Right lobe of liver (tissue), 6 donors: ENCODE measurements at regions of chr12 and their contacts with region 1.

Region 1: DNA sequence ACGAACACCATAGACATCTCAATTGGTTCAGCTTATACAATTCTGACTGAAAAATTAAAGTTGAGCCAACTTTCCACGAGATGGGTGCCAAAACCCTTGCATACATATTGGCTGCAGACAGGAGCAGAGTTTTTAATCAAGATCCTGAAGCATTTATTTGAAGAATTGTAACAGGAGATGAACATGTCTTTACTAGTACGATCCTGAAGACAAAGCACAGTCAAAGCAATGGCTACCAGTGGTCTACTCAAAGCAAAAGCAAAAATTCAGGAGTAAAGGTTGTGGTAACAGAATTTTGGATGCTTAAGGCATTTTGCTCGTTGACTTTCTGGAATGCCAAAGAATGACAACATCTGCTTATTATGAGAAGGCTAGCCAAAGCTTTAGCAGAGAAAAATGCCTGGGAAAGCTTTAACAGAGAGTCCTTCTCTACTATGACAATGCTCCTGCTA is 20.7 kb downstream of the ZDHHC17 start:
- DNase-seq: no peak
- ATAC-seq: no peak
- H3K4me3 ChIP-seq: no peak overlapping the region
- H3K27ac ChIP-seq: no peak overlapping the region
- H3K4me1 ChIP-seq: no peaks in the 10 kb centered on the region
- H3K27me3 ChIP-seq: no peaks in the 10 kb centered on the region
- CTCF ChIP-seq: no peak
- POLR2A ChIP-seq: no peak

Region 2: DNA sequence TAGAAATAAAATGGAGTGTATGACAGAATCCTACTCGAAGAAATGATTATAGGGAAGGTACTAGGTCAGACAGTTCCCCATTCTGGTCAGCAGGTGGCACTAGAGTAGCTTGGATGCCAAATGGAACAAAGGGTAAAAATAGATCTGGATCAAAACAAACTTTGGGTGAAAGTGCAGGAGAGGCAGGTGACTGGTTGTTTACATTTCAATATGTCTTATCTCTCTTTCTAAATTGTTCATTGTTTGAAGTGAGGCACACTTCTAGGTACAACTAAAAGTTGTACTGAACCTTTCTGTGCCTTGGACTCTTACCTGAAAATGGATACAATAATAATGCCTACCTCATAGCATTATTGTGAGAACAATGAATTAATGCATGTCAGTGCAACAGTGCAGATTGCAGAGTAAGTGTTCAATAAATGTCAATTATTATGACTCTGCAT is 163.0 kb before region 1 on chr12:
- intact Hi-C with region 1: loop called in 1 of 2 experiments (anchors 10 kb)
- DNase-seq: peak; percentile 49 to 73 (median 59)
- ATAC-seq: peak; percentile 99
- H3K4me3 ChIP-seq: no peak overlapping the region
- H3K27ac ChIP-seq: peak overlapping the region in 1 of 3 donors; percentile 56
- H3K4me1 ChIP-seq: peaks cover 0 to 9% (median 2%) of the 10 kb centered on the region in 4 donors
- H3K27me3 ChIP-seq: no peaks in the 10 kb centered on the region
- CTCF ChIP-seq: peak; percentile 90 to 99 (median 95)
- POLR2A ChIP-seq: no peak